ENCODE measurements at regions of chrX and their contacts with region 1.

Region 1: DNA sequence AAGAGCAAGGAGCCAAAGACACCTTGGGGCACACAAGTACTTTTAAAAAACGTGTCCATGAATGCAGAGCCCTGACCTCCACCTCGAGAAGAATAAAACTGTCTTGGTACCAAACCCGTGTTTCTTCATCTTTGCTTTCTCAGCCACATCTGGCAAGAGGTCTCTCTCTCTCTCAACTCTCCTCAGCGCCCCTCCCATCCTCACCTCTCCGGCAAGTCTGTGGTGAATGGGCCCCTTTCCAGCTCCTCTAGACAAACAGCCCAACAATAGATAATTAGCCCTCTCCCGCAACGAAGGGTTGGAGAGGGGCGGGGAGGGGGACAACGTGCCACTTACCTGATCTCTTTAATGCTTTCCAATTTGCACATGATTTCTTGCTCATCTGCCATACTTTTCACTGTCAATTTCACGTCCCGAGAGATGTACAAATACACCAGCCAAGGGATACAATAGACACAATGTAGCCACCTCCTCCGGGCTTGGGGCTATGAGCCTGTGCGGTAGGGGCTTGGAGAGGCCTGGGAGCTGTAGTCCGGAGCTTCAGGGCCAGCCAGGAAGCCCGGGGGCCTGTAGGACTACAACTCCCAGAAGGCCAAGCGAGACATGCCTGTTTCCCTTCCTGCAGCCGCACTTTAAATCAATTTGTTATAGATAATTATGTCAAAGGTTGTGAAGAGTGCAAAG is at the start of gene ZC4H2:
- DNase-seq: peak; percentile 34 to 85 (median 59)
- ATAC-seq: peak; percentile 96
- H3K4me3 ChIP-seq: peak within 1 kb of the TSS; percentile 74
- H3K4me3 Mint-ChIP-seq: peak within 1 kb of the TSS; percentile 98
- H3K27ac ChIP-seq: no peak within 1 kb of the TSS
- H3K27ac Mint-ChIP-seq: peak within 1 kb of the TSS; percentile 81
- H3K4me1 ChIP-seq: peaks cover 14% of the 10 kb centered on the region
- H3K4me1 Mint-ChIP-seq: peaks cover 28% of the 10 kb centered on the region
- H3K27me3 ChIP-seq: no peaks in the 10 kb centered on the region
- H3K27me3 Mint-ChIP-seq: no peaks in the 10 kb centered on the region
- CTCF ChIP-seq: no peak
- total RNA-seq, gene ZC4H2: 7.8 to 8.7 TPM

Region 2: DNA sequence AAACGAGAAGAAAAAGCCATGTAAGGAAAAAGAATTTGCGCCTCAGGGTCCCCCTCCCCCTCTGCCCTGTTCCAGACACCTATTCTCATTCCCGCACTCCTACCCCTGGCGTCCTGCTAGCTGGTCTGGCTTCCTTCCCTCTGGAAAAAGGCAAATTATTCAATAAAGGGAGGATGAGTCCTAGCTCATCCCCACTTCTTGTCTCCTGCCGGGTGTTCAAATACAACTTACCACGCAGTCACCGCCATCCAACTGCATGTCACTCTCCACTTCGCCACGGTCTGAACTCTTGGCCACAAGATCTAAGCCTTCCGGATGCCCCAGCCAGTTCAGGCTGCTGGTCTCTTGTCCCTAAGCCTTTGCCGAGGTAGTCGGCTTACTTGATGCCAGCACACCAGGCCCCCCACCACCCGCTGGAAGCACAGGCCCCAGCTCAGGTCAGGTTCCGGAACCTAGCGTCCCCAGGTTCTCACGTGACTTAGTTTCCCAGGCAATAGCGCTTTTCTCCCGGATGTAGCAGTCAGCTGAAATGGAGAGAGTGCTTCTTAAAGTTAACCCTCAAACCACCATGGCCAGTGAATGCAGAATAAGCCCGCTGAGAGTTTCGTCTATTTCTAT is 1415.4 kb before region 1 on chrX:
- CTCF ChIA-PET with region 1: no interaction called
- POLR2A ChIA-PET with region 1: no interaction called
- intact Hi-C with region 1: loop called in 1 of 2 experiments (anchors 5 kb)
- DNase-seq: peak; percentile 7 to 76 (median 31)
- ATAC-seq: peak; percentile 90
- H3K4me3 ChIP-seq: peak overlapping the region; percentile 84
- H3K4me3 Mint-ChIP-seq: peak overlapping the region; percentile 96
- H3K27ac ChIP-seq: peak overlapping the region; percentile 13 to 62
- H3K27ac Mint-ChIP-seq: peak overlapping the region; percentile 93
- H3K4me1 ChIP-seq: no peaks in the 10 kb centered on the region
- H3K4me1 Mint-ChIP-seq: peaks cover 25% of the 10 kb centered on the region
- H3K27me3 ChIP-seq: no peaks in the 10 kb centered on the region
- H3K27me3 Mint-ChIP-seq: no peaks in the 10 kb centered on the region
- CTCF ChIP-seq: no peak

Region 3: GRCh38 chrX:64394874-64395567 is 581.1 kb before region 1 on chrX and contains the start of gene MTMR8:
- CTCF ChIA-PET with region 1: no interaction called
- POLR2A ChIA-PET with region 1: no interaction called
- intact Hi-C with region 1: loop called in 1 of 2 experiments (anchors 5 kb)
- DNase-seq: peak; percentile 59 to 89 (median 73)
- ATAC-seq: peak; percentile 95
- H3K4me3 ChIP-seq: peak within 1 kb of the TSS; percentile 85
- H3K4me3 Mint-ChIP-seq: peak within 1 kb of the TSS; percentile 90
- H3K27ac ChIP-seq: peak within 1 kb of the TSS; percentile 21 to 22
- H3K27ac Mint-ChIP-seq: peak within 1 kb of the TSS; percentile 85
- H3K4me1 ChIP-seq: peaks cover 17% of the 10 kb centered on the region
- H3K4me1 Mint-ChIP-seq: peaks cover 46% of the 10 kb centered on the region
- H3K27me3 ChIP-seq: no peaks in the 10 kb centered on the region
- H3K27me3 Mint-ChIP-seq: no peaks in the 10 kb centered on the region
- CTCF ChIP-seq: no peak
- total RNA-seq, gene MTMR8: 2.3 to 3.1 TPM

Region 4: GRCh38 chrX:64782923-64783322 is 193.2 kb before region 1 on chrX:
- CTCF ChIA-PET with region 1: no interaction called
- POLR2A ChIA-PET with region 1: no interaction called
- intact Hi-C with region 1: no loop called
- DNase-seq: no peak
- ATAC-seq: no peak
- H3K4me3 ChIP-seq: no peak overlapping the region
- H3K4me3 Mint-ChIP-seq: no peak overlapping the region
- H3K27ac ChIP-seq: no peak overlapping the region
- H3K27ac Mint-ChIP-seq: no peak overlapping the region
- H3K4me1 ChIP-seq: no peaks in the 10 kb centered on the region
- H3K4me1 Mint-ChIP-seq: no peaks in the 10 kb centered on the region
- H3K27me3 ChIP-seq: no peaks in the 10 kb centered on the region
- H3K27me3 Mint-ChIP-seq: no peaks in the 10 kb centered on the region
- CTCF ChIP-seq: no peak

Region 5: GRCh38 chrX:64994131-64994798 is 18.1 kb after region 1 on chrX:
- CTCF ChIA-PET with region 1: no interaction called
- POLR2A ChIA-PET with region 1: no interaction called
- intact Hi-C with region 1: no loop called
- DNase-seq: no peak
- ATAC-seq: no peak
- H3K4me3 ChIP-seq: no peak overlapping the region
- H3K4me3 Mint-ChIP-seq: no peak overlapping the region
- H3K27ac ChIP-seq: no peak overlapping the region
- H3K27ac Mint-ChIP-seq: no peak overlapping the region
- H3K4me1 ChIP-seq: no peaks in the 10 kb centered on the region
- H3K4me1 Mint-ChIP-seq: no peaks in the 10 kb centered on the region
- H3K27me3 ChIP-seq: no peaks in the 10 kb centered on the region
- H3K27me3 Mint-ChIP-seq: no peaks in the 10 kb centered on the region
- CTCF ChIP-seq: no peak

Region 6: GRCh38 chrX:65034668-65035445 is 58.7 kb after region 1 on chrX:
- CTCF ChIA-PET with region 1: interaction called, 12 read pairs
- POLR2A ChIA-PET with region 1: interaction called, 21 read pairs
- intact Hi-C with region 1: loop called (anchors 1 to 2 kb)
- DNase-seq: peak; percentile 61 to 92 (median 78)
- ATAC-seq: peak; percentile 87
- H3K4me3 ChIP-seq: peak within 1 kb of the TSS; percentile 71
- H3K4me3 Mint-ChIP-seq: peak within 1 kb of the TSS; percentile 98
- H3K27ac ChIP-seq: peak within 1 kb of the TSS; percentile 52 to 59
- H3K27ac Mint-ChIP-seq: peak within 1 kb of the TSS; percentile 98
- H3K4me1 ChIP-seq: peaks cover 10% of the 10 kb centered on the region
- H3K4me1 Mint-ChIP-seq: peaks cover 42% of the 10 kb centered on the region
- H3K27me3 ChIP-seq: no peaks in the 10 kb centered on the region
- H3K27me3 Mint-ChIP-seq: no peaks in the 10 kb centered on the region
- CTCF ChIP-seq: peak; percentile 65

Region 7: DNA sequence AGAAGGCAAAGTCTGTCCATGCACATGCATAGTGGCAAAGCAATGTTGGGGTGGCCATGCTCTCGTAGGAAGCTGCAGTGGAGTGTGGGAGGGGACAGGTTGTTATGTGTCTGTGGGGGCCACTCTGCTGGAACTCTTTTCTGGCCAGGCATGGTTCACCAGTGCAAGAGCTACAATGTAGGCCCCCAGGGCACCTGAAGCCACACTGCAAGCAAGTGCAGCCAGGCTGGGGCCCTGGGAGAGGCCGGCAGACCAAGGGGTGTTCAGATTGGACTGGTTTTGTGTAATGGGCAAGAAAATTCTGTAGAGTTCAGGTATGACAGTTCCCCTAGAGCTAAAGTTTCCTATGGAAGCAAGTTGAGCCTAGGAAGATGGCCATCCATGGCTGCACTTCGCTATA is 97.1 kb after region 1 on chrX:
- CTCF ChIA-PET with region 1: no interaction called
- POLR2A ChIA-PET with region 1: no interaction called
- intact Hi-C with region 1: no loop called
- DNase-seq: no peak
- ATAC-seq: no peak
- H3K4me3 ChIP-seq: no peak overlapping the region
- H3K4me3 Mint-ChIP-seq: no peak overlapping the region
- H3K27ac ChIP-seq: no peak overlapping the region
- H3K27ac Mint-ChIP-seq: no peak overlapping the region
- H3K4me1 ChIP-seq: no peaks in the 10 kb centered on the region
- H3K4me1 Mint-ChIP-seq: no peaks in the 10 kb centered on the region
- H3K27me3 ChIP-seq: no peaks in the 10 kb centered on the region
- H3K27me3 Mint-ChIP-seq: no peaks in the 10 kb centered on the region
- CTCF ChIP-seq: no peak

Region 8: DNA sequence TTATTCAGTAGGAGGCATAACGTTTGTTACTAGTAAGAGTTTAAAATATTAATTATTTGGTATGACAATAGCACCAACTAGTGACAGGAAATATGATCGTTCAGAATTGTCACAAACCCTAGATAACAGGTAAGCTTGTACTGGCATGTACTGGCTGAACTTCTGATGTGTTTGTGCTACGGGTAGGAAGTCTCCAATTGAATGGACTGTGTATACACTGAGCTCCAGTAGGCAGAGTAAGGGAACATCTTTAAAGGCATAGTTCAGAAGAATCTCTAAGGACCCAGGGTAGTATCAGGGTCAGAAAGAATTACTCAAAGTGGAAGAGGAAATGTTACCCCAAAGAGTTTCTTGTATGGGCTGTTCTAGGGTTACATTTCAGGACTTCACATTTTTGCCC is 1432.4 kb after region 1 on chrX:
- CTCF ChIA-PET with region 1: no interaction called
- POLR2A ChIA-PET with region 1: no interaction called
- intact Hi-C with region 1: no loop called
- DNase-seq: peak in 3 of 14 experiments; percentile 14 to 29 (median 25)
- ATAC-seq: no peak
- H3K4me3 ChIP-seq: no peak overlapping the region
- H3K4me3 Mint-ChIP-seq: no peak overlapping the region
- H3K27ac ChIP-seq: no peak overlapping the region
- H3K27ac Mint-ChIP-seq: no peak overlapping the region
- H3K4me1 ChIP-seq: no peaks in the 10 kb centered on the region
- H3K4me1 Mint-ChIP-seq: no peaks in the 10 kb centered on the region
- H3K27me3 ChIP-seq: no peaks in the 10 kb centered on the region
- H3K27me3 Mint-ChIP-seq: no peaks in the 10 kb centered on the region
- CTCF ChIP-seq: peak; percentile 14